SK-N-SH (cell line): ENCODE measurements at regions of chr4 and their contacts with region 1.

Region 1: GRCh38 chr4:139501927-139502899 is 48.3 kb downstream of the RAB33B start:
- DNase-seq: no peak
- H3K4me3 ChIP-seq: no peak overlapping the region
- H3K27ac ChIP-seq: no peak overlapping the region
- H3K4me1 ChIP-seq: no peaks in the 10 kb centered on the region; a peak in 1 of 4 replicates
- H3K27me3 ChIP-seq: no peaks in the 10 kb centered on the region
- CTCF ChIP-seq: no peak
- EP300 ChIP-seq: no peak
- RAD21 ChIP-seq: no peak

Region 2: DNA sequence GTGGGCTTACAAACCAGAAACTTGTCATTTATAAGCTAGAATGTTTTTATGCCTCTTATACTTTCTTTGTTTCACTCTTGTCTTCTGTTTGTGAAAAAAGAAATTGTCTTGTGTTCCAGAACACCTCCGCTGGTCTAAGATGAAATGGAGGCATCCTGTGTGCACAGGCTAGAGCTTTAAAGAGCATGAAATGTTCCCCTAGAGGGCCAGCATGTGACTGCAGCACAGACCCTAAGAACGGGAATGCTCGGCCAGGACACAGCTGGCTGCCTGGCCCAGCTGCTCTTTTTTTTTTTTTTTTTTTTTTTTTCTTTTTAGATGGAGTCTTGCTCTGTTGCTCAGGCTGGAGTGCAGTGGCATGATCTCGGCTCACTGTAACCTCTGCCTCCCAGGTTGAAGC is 20.2 kb after region 1 on chr4:
- CTCF ChIA-PET with region 1: interaction called, 10 read pairs
- POLR2A ChIA-PET with region 1: no interaction called
- DNase-seq: no peak
- H3K4me3 ChIP-seq: no peak overlapping the region
- H3K27ac ChIP-seq: no peak overlapping the region
- H3K4me1 ChIP-seq: no peaks in the 10 kb centered on the region
- H3K27me3 ChIP-seq: no peaks in the 10 kb centered on the region
- CTCF ChIP-seq: no peak
- EP300 ChIP-seq: no peak
- RAD21 ChIP-seq: no peak

Region 3: GRCh38 chr4:139540632-139541031 is 38.4 kb after region 1 on chr4:
- CTCF ChIA-PET with region 1: interaction called, 11 read pairs
- POLR2A ChIA-PET with region 1: no interaction called
- DNase-seq: no peak
- H3K4me3 ChIP-seq: no peak overlapping the region
- H3K27ac ChIP-seq: no peak overlapping the region
- H3K4me1 ChIP-seq: no peaks in the 10 kb centered on the region
- H3K27me3 ChIP-seq: no peaks in the 10 kb centered on the region
- CTCF ChIP-seq: no peak
- EP300 ChIP-seq: no peak
- RAD21 ChIP-seq: no peak

Region 4: DNA sequence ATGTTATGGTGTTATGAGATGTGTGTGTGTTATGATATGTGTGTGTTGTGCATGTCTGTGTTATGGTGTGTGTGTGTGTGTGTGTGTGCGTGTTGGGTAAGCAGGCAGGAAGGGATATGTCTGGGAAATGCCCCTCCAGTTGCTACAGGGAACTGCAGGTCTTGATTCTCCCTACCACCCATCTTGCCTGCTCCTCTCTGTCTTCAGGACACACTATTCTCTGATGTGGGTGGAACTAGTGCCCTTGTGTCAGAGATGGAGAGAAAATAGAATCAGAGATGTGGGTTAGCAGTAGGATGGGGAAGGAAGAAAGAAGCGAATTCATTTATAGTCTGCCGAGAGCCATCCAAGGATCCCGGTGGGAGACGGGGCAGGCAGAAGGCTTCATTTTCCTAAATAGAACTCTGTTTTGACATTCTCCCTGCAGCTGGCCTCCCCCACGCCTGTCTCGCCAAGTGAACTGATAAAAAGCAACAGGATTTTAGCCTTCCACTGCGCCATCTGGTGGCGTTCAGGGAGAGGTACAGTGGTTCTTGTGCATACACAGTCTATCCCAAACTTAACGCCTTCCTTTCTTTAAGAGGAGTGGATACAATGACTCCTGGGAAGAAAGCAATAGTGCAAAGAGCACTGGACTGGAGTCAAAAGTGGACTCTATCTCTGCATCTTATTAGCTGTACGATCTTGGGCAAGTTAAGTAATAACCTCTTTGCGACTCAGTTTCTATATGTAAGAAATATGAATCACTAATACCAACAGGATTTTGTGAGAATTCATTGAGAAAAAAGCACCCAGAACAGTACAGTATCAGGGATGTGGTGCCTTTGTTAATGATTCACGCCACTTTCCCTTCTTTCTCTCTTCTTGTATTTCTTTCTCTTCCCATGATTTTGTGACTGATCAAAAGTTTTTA is 149.3 kb after region 1 on chr4:
- CTCF ChIA-PET with region 1: interaction called, 19 read pairs
- POLR2A ChIA-PET with region 1: no interaction called
- DNase-seq: peak; percentile 64
- H3K4me3 ChIP-seq: peak overlapping the region in 1 of 2 experiments; percentile 23; a peak in 1 of 4 replicates
- H3K27ac ChIP-seq: no peak overlapping the region
- H3K4me1 ChIP-seq: peaks cover 0 to 11% of the 10 kb centered on the region in 2 experiments; a peak in 1 of 4 replicates
- H3K27me3 ChIP-seq: no peaks in the 10 kb centered on the region
- CTCF ChIP-seq: peak; percentile 93
- EP300 ChIP-seq: no peak
- RAD21 ChIP-seq: peak; percentile 81